ENCODE measurements at regions of chr5 and their contacts with region 1.

Region 1: GRCh38 chr5:80172067-80172695 is 83.7 kb downstream of the SERINC5 start:
- DNase-seq: no peak
- ATAC-seq: no peak
- H3K4me3 ChIP-seq: no peak overlapping the region
- H3K4me3 Mint-ChIP-seq: no peak overlapping the region
- H3K27ac ChIP-seq: no peak overlapping the region
- H3K27ac Mint-ChIP-seq: peak overlapping the region; percentile 78
- H3K4me1 ChIP-seq: peaks cover 14% of the 10 kb centered on the region
- H3K4me1 Mint-ChIP-seq: peaks cover 48% of the 10 kb centered on the region
- H3K27me3 ChIP-seq: no peaks in the 10 kb centered on the region
- H3K27me3 Mint-ChIP-seq: no peaks in the 10 kb centered on the region
- CTCF ChIP-seq: no peak

Region 2: GRCh38 chr5:80159133-80159815 is 12.9 kb before region 1 on chr5:
- CTCF ChIA-PET with region 1: interaction called, 3 read pairs
- POLR2A ChIA-PET with region 1: interaction called, 4 read pairs
- intact Hi-C with region 1: loop called in 1 of 2 experiments (anchors 2 kb)
- DNase-seq: no peak
- ATAC-seq: no peak
- H3K4me3 ChIP-seq: no peak overlapping the region
- H3K4me3 Mint-ChIP-seq: no peak overlapping the region
- H3K27ac ChIP-seq: peak overlapping the region in 1 of 2 donors; percentile 1
- H3K27ac Mint-ChIP-seq: peak overlapping the region; percentile 69
- H3K4me1 ChIP-seq: peaks cover 2% of the 10 kb centered on the region
- H3K4me1 Mint-ChIP-seq: peaks cover 49% of the 10 kb centered on the region
- H3K27me3 ChIP-seq: no peaks in the 10 kb centered on the region
- H3K27me3 Mint-ChIP-seq: no peaks in the 10 kb centered on the region
- CTCF ChIP-seq: no peak

Region 3: GRCh38 chr5:80231243-80231642 is 59.1 kb after region 1 on chr5:
- CTCF ChIA-PET with region 1: no interaction called
- POLR2A ChIA-PET with region 1: no interaction called
- intact Hi-C with region 1: no loop called
- DNase-seq: no peak
- ATAC-seq: no peak
- H3K4me3 ChIP-seq: no peak overlapping the region
- H3K4me3 Mint-ChIP-seq: peak overlapping the region; percentile 23
- H3K27ac ChIP-seq: no peak overlapping the region
- H3K27ac Mint-ChIP-seq: peak overlapping the region; percentile 91
- H3K4me1 ChIP-seq: peaks cover 69% of the 10 kb centered on the region
- H3K4me1 Mint-ChIP-seq: peaks cover 83% of the 10 kb centered on the region
- H3K27me3 ChIP-seq: no peaks in the 10 kb centered on the region
- H3K27me3 Mint-ChIP-seq: no peaks in the 10 kb centered on the region
- CTCF ChIP-seq: no peak